AG04450 (cell line): ENCODE measurements at regions of chr11 and their contacts with region 1.

Region 1: GRCh38 chr11:20609727-20610707 is 10.6 kb downstream of the SLC6A5 start:
- DNase-seq: peak; percentile 13
- H3K4me3 ChIP-seq: no peak overlapping the region
- H3K27ac ChIP-seq: no peak overlapping the region
- H3K27me3 ChIP-seq: peaks cover 30% of the 10 kb centered on the region
- CTCF ChIP-seq: peak; percentile 95

Region 2: DNA sequence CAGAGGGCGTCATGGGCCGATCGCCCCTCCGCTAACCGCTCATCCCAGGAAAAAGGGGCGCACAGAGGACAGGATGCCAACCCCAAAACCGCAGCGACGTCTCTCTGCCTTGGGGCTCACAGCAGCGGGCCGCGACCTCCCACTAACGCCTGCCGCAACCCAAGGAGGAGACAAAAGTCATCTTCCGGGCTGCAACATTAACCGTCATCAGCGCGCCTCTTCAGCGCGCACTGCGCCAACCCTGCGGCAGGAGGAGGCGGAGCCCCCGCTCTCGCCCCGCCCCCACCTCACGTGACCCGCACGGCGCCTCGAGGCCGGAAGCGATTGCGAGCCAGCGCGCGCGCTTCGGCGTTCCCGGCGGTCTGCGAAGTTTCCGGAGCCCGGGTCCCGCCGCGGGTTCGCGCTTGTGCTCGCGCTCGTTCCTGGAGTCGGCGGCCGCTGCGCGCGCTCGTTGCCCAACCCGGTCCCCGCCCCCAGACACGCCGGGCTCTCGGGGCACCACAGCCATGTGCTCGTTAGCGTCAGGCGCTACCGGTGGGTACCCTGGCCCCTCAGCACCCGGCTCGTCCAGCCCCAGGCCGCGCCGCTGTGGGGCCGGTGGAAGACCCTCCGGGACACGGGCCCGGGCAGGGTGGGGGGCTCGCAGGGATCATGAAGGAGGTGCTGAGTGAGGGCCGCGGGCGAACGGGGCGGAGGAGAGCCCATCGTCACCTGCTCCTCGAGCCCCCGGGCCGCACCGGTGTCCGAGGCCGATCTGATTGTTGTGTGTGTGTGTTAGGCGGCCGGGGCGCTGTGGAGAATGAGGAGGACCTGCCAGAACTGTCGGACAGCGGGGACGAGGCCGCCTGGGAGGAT is 222.5 kb before region 1 on chr11 and contains the start of gene PRMT3:
- CTCF ChIA-PET with region 1: interaction called, 23 read pairs
- POLR2A ChIA-PET with region 1: no interaction called
- DNase-seq: peak; percentile 88
- H3K4me3 ChIP-seq: peak within 1 kb of the TSS; percentile 95
- H3K27ac ChIP-seq: peak within 1 kb of the TSS; percentile 94
- H3K27me3 ChIP-seq: no peaks in the 10 kb centered on the region
- CTCF ChIP-seq: peak; percentile 99
- polyA plus RNA-seq, gene PRMT3: 11.6 and 14.8 TPM in 2 replicates

Region 3: GRCh38 chr11:20592741-20593140 is 17.3 kb before region 1 on chr11:
- CTCF ChIA-PET with region 1: interaction called, 11 read pairs
- POLR2A ChIA-PET with region 1: no interaction called
- DNase-seq: no peak
- H3K4me3 ChIP-seq: no peak overlapping the region
- H3K27ac ChIP-seq: no peak overlapping the region
- H3K27me3 ChIP-seq: peaks cover 19% of the 10 kb centered on the region
- CTCF ChIP-seq: no peak